GM10248 (cell line): ENCODE measurements at regions of chr12 and their contacts with region 1.

Region 1: GRCh38 chr12:93008044-93008778 is 79.1 kb upstream of the EEA1 start:
- DNase-seq: peak; percentile 53
- CTCF ChIP-seq: no peak

Region 2: DNA sequence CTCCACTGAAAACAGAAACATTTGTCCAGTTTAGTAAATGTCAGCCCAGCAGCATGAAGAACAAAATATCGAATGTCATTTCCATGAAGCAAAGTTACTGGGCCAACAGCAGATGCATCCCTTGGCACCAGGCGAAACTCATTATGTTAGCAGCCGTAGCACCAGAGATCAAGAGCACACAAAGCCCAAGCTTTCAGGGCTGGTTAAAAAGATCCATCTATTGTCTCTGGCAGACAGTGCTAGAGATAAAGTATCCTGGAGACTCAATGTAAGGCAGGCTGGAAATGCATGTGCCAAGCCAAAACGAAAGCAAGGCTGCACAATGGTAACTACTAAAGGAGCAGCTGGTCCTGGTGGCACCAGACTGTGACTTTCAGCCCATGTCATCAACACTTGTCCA is 425.7 kb before region 1 on chr12:
- CTCF ChIA-PET with region 1: no interaction called
- POLR2A ChIA-PET with region 1: no interaction called
- DNase-seq: no peak
- CTCF ChIP-seq: no peak

Region 3: DNA sequence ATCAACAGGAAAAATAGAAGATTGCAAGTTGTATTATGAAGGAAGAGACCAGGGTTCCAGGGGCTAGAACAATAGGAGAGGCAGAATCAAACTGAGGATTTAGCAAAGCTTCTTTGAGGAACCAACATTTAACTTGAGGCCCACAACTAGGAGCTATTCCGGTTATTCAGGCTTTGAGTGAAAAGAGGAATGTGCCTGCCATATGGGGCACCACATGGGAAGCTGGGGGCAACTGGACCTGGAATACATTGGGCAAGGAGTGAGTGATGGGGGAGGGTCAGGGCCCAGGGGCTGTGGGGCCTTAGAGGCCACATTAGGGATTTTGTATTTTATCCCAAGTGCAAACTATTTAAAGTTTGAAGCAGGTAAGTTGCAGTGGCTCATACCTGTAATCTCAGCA is 49.4 kb before region 1 on chr12:
- CTCF ChIA-PET with region 1: no interaction called
- POLR2A ChIA-PET with region 1: no interaction called
- DNase-seq: no peak
- CTCF ChIP-seq: no peak

Region 4: DNA sequence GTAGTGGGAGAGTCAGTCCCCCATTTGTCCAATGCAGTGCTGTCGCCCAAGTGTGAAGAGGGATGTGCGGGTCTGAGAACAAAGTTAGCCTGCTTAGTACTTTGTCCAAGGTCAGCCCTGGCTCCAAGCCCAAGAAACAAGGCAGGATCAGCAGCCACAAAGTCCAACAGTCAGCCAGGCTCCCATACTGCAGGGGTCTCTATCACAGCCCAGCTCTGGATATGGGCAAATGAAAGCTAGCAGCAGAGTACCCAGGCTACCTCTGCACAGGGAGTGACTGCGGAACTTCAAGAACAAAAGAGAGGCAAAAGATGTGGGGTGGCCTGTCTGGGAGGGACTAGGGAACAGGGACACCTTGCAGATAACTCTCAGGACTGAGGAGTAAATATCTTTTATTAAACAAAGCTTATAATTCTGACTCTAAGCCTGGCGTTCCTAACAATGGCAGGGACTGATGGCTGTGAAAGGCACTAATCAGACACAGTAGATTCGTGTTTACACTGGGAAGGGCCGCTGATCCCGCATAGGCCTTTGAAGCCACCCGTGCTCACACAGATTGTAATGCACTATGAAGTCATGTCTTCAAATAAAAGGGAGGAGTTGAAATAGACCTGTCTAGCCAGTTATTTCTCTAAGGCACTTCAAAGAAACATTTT is 11.9 kb after region 1 on chr12:
- CTCF ChIA-PET with region 1: interaction called, 30 read pairs
- POLR2A ChIA-PET with region 1: no interaction called
- DNase-seq: no peak
- CTCF ChIP-seq: no peak

Region 5: GRCh38 chr12:93079271-93079670 is 71.1 kb after region 1 on chr12:
- CTCF ChIA-PET with region 1: no interaction called
- POLR2A ChIA-PET with region 1: no interaction called
- DNase-seq: no peak
- CTCF ChIP-seq: no peak